PC-9 (cell line): ENCODE measurements at regions of chr1 and their contacts with region 1.

Region 1: GRCh38 chr1:206041640-206042039 is 11.3 kb upstream of the RHEX start:
- DNase-seq: no peak
- H3K4me3 ChIP-seq: no peak overlapping the region
- H3K27ac ChIP-seq: no peak overlapping the region
- H3K4me1 ChIP-seq: no peaks in the 10 kb centered on the region
- H3K27me3 ChIP-seq: no peaks in the 10 kb centered on the region
- CTCF ChIP-seq: no peak

Region 2: DNA sequence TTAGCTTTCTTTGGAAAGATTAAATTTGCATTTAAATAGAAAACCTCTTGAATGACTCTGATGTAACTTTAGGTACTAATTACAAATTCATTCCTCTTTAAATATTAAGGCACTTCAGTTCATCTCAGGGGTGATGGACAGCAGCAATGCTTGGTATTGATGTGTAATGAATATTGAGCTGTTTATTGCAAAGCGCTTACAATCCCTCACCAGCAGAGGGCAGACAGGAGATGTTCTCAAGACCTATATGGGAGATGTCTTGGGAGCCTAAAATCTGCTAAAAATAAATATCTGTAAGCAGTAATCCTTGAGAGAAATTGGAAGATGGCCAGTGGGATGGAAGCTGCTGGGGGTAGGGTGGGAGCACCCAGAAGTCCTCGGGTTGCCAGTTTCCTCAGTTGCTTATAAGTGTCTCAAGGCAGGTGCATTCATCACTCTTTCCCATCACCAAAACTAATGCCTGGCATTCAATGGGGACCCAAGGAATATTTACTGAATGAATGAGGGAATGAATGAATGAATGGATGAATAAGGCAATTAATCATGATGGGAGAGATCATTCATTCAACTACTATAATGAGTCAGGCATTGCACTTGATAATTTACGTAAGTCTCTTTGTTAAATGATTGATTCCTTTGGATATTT is 687.3 kb before region 1 on chr1:
- CTCF ChIA-PET with region 1: no interaction called
- POLR2A ChIA-PET with region 1: no interaction called
- intact Hi-C with region 1: no loop called
- DNase-seq: peak; percentile 43
- H3K4me3 ChIP-seq: no peak overlapping the region
- H3K27ac ChIP-seq: no peak overlapping the region
- H3K4me1 ChIP-seq: 0 out of 2 replicates have a peak, but pooled peaks cover 2% of the 10 kb centered on the region
- H3K27me3 ChIP-seq: peaks cover 26% of the 10 kb centered on the region
- CTCF ChIP-seq: peak; percentile 86

Region 3: DNA sequence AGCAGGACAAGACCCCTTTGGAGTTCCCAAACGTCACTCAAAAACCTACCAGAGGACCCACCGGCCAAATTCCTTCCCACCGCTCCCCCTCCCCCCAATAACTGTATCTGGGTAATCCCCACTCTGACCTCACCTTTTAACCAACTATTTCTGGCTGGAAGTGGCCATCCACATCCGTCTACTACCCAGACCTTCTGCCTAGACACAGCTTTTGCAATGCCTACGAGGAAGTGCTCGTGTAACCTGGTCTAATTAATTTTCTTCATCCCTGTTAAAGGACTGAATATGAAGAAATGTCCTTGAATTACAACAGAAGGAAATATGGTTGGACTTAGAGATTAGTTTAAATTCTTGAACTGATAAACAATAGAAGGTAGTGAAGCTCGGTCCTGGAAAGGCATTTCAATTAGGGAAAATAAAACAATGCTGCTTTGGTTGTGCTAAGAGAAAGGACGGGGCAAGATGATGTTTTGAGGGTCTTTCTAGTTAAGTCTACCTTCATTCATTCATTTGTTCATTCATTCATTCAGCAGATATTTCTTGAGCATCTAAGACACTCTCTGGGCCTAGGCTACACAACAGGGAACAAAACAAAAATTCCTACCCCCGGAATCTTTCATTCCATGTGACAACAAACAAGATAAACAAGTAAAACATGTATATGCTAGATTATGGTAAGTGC is 56.7 kb after region 1 on chr1:
- CTCF ChIA-PET with region 1: interaction called, 14 read pairs
- POLR2A ChIA-PET with region 1: no interaction called
- intact Hi-C with region 1: no loop called
- DNase-seq: no peak
- H3K4me3 ChIP-seq: no peak overlapping the region
- H3K27ac ChIP-seq: no peak overlapping the region
- H3K4me1 ChIP-seq: no peaks in the 10 kb centered on the region
- H3K27me3 ChIP-seq: no peaks in the 10 kb centered on the region
- CTCF ChIP-seq: no peak